ENCODE measurements at regions of chr10 and their contacts with region 1.

Region 1: GRCh38 chr10:63166742-63167258 is 33.7 kb downstream of the NRBF2 start:
- DNase-seq: no peak
- H3K4me3 Mint-ChIP-seq: no peak overlapping the region
- H3K27ac Mint-ChIP-seq: no peak overlapping the region
- H3K4me1 Mint-ChIP-seq: peaks cover 35% of the 10 kb centered on the region
- H3K27me3 Mint-ChIP-seq: no peaks in the 10 kb centered on the region

Region 2: DNA sequence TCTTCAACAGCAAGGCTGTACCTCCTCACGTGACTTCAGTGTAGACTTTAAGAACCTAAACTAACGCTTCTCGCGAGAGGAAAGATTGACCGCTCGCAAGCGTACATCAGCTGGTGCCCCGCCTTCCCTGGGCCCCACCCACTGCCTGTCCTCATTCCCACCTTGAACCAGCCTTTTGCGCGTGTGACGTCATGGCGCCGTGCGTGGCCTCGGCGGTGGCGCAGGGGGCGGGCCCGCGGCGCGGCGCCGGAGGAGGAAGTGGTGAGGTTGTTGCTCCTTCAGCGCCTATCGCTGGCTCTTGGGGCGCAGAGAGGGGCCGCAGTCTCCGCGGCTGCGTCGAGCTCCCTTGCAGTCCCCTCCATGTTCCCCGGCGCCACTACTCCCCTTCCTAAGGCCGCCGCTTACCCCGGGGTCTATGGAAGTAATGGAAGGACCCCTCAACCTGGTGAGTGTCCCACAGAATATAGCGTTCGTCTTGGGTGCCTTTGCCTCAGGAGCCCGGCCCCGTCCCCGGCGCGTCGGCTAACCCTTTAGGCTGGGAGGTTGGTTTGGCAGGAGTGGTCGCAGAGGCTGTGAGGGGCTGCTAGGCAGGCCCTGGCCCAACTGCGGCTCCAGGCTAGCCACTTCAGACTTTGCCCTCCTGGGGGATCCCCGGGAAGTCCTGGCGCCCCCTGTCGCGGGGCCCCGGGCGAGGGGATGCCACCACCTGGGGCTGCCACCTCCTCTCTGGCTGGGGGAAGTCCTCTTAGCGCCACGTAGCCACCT is 33.6 kb before region 1 on chr10 and contains the start of gene NRBF2:
- CTCF ChIA-PET with region 1: interaction called, 35 read pairs
- POLR2A ChIA-PET with region 1: interaction called, 6 read pairs
- DNase-seq: peak; percentile 98
- H3K4me3 Mint-ChIP-seq: peak within 1 kb of the TSS; percentile 91
- H3K27ac Mint-ChIP-seq: peak within 1 kb of the TSS; percentile 95
- H3K4me1 Mint-ChIP-seq: peaks cover 35% of the 10 kb centered on the region
- H3K27me3 Mint-ChIP-seq: no peaks in the 10 kb centered on the region
- total RNA-seq, gene NRBF2: 25.1 to 26.8 TPM

Region 3: GRCh38 chr10:63145782-63146181 is 21.0 kb before region 1 on chr10:
- CTCF ChIA-PET with region 1: interaction called, 14 read pairs
- POLR2A ChIA-PET with region 1: no interaction called
- DNase-seq: no peak
- H3K4me3 Mint-ChIP-seq: no peak overlapping the region
- H3K27ac Mint-ChIP-seq: no peak overlapping the region
- H3K4me1 Mint-ChIP-seq: peaks cover 30% of the 10 kb centered on the region
- H3K27me3 Mint-ChIP-seq: no peaks in the 10 kb centered on the region

Region 4: DNA sequence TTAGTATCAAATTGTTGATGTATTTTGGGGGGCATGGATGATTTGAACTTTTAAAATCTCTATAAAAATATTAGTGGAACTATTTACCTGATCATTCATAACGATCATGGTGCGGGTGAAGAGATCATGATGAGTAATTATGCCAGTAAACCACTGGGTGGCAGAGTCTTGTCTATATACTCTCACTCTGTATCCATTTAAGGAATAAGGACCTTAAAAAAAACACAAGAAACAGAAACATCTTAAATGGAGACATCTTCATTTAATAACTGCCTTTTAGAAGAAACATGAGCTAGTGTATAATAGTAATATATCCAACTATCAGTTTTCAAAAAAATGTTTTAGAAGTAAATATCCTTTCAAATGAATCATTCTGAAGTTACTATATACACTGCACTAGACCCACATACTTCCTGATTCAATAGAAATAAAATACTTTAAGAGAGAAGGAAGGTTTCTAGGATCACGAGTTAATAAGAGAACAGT is 50.4 kb after region 1 on chr10:
- CTCF ChIA-PET with region 1: interaction called, 10 read pairs
- POLR2A ChIA-PET with region 1: interaction called, 4 read pairs
- DNase-seq: no peak
- H3K4me3 Mint-ChIP-seq: no peak overlapping the region
- H3K27ac Mint-ChIP-seq: no peak overlapping the region
- H3K4me1 Mint-ChIP-seq: peaks cover 51% of the 10 kb centered on the region
- H3K27me3 Mint-ChIP-seq: no peaks in the 10 kb centered on the region

Region 5: GRCh38 chr10:63521416-63522276 is 354.8 kb after region 1 on chr10:
- CTCF ChIA-PET with region 1: interaction called, 4 read pairs
- POLR2A ChIA-PET with region 1: interaction called, 12 read pairs
- DNase-seq: peak; percentile 60
- H3K4me3 Mint-ChIP-seq: peak overlapping the region; percentile 76
- H3K27ac Mint-ChIP-seq: peak overlapping the region; percentile 87
- H3K4me1 Mint-ChIP-seq: peaks cover 64% of the 10 kb centered on the region
- H3K27me3 Mint-ChIP-seq: no peaks in the 10 kb centered on the region

Region 6: GRCh38 chr10:63720072-63720537 is 553.3 kb after region 1 on chr10:
- CTCF ChIA-PET with region 1: interaction called, 189 read pairs
- POLR2A ChIA-PET with region 1: interaction called, 19 read pairs
- DNase-seq: peak; percentile 47
- H3K4me3 Mint-ChIP-seq: no peak overlapping the region
- H3K27ac Mint-ChIP-seq: no peak overlapping the region
- H3K4me1 Mint-ChIP-seq: peaks cover 28% of the 10 kb centered on the region
- H3K27me3 Mint-ChIP-seq: peaks cover 8% of the 10 kb centered on the region

Measured in activated CD4-positive, alpha-beta memory T cell treated with anti-CD3 and anti-CD28 coated beads, Interleukin-2, amount 10 ng/mL, durations not matched to agents 7 days and 5 days (primary cell).